Colonic mucosa (tissue), 4 donors: ENCODE measurements at regions of chr2 and their contacts with region 1.

Region 1: GRCh38 chr2:69724540-69725159 is 17.3 kb upstream of the ANXA4 start:
- DNase-seq: peak; percentile 96
- H3K4me3 ChIP-seq: no peak overlapping the region
- H3K27ac ChIP-seq: no peak overlapping the region
- H3K4me1 ChIP-seq: no peaks in the 10 kb centered on the region
- H3K27me3 ChIP-seq: no peaks in the 10 kb centered on the region
- CTCF ChIP-seq: peak; percentile 91

Region 2: GRCh38 chr2:69816923-69817542 is 92.4 kb after region 1 on chr2:
- intact Hi-C with region 1: loop called (anchors 2 kb)
- DNase-seq: peak; percentile 86
- H3K4me3 ChIP-seq: no peak overlapping the region
- H3K27ac ChIP-seq: no peak overlapping the region
- H3K4me1 ChIP-seq: no peaks in the 10 kb centered on the region
- H3K27me3 ChIP-seq: no peaks in the 10 kb centered on the region
- CTCF ChIP-seq: peak; percentile 96

Region 3: DNA sequence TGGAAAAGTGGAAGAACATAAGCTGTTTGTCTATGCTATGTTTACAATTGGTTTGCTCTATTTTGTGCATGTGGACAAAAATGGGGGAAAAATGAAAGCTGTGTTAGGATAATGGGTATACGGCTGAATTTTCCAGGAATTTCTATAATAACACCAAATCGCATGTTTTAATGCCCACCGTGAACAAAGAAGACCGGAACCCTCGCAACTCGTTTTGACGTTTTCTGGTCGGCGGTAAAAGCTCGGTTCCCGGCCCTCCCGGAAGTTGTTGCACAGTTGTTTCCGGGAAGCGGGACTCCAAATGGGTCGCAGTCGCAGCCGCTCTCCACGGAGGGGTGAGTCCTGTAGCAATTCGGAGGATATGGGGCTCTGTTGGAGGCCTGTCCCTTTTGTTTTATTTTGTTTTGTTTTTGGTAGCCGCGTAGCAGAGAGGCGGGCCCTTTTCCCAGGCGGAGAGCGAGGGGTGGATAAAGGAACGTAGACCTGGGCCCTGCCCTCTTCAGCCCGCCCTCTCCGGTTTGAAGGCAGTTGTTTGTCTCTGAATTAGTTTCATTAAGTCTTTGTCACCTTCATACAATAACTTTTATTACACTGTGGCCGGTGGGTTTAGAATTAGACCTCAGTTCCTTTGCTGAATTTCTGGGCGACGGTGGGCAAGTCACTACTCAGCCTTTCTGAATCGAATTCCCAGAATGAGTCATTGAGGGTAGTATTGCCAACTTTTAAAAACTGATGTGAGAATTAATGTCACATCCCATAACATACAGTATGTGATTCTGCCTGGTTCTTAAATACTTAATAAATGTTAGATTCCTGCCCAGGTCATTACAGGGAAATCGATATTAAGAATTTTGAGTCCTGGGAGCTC is 169.3 kb after region 1 on chr2 and contains the start of gene SNRNP27:
- intact Hi-C with region 1: loop called (anchors 10 kb)
- DNase-seq: peak; percentile 83
- H3K4me3 ChIP-seq: peak within 1 kb of the TSS; percentile 58
- H3K27ac ChIP-seq: peak within 1 kb of the TSS; percentile 45
- H3K4me1 ChIP-seq: peaks cover 3% of the 10 kb centered on the region
- H3K27me3 ChIP-seq: no peaks in the 10 kb centered on the region
- CTCF ChIP-seq: no peak
- total RNA-seq, gene SNRNP27: 30.8 to 34.8 TPM